Gastrocnemius medialis (tissue), 4 donors: ENCODE measurements at regions of chr4 and their contacts with region 1.

Region 1: DNA sequence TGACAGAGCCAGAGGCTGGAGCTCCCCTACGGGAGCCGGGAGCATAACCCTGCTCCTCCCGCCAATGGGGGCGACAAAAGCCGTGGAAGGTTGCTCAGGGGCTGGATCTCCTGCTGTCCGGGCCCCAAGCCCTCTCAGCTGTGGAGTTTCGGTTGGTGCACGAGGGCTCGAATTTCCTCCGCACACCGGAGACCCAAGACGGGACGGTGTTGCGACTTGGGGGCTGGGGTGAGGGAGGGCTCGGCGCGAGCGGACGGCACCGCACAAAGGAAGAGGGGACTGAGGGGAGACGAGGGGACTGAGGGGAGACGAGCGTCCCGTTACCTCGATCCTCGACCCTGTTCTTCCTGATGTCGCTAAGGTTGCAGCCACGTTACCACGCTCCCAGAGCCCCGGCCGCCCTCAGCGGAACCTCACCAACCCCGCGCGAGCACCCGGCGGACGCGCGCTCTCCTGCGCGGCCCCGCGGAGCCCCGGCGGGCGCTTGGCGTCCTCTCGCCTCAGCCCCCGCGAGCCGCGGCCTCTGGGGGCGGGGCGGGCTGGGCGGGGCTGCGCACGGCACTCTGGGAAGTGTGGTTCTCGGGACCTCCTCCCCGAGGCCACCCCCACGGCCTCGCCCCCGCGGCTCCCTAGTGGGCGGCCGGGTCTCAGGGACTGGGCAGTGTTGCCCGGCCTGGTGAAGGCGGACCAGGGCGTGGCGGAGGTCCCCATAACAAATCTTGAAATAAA is at the start of gene KLHL8:
- DNase-seq: peak; percentile 54 to 81
- ATAC-seq: peak; percentile 87 to 88
- H3K4me3 ChIP-seq: peak within 1 kb of the TSS; percentile 85 to 96 (median 90)
- H3K27ac ChIP-seq: peak within 1 kb of the TSS; percentile 92 to 96 (median 94)
- H3K4me1 ChIP-seq: peaks cover 15 to 23% of the 10 kb centered on the region in 2 donors
- H3K27me3 ChIP-seq: no peaks in the 10 kb centered on the region
- CTCF ChIP-seq: peak in 2 of 5 experiments; percentile 1 to 13
- POLR2A ChIP-seq: peak; percentile 84 to 90
- total RNA-seq, gene KLHL8: 15.5 to 19.4 (median 18.6) TPM

Region 2: DNA sequence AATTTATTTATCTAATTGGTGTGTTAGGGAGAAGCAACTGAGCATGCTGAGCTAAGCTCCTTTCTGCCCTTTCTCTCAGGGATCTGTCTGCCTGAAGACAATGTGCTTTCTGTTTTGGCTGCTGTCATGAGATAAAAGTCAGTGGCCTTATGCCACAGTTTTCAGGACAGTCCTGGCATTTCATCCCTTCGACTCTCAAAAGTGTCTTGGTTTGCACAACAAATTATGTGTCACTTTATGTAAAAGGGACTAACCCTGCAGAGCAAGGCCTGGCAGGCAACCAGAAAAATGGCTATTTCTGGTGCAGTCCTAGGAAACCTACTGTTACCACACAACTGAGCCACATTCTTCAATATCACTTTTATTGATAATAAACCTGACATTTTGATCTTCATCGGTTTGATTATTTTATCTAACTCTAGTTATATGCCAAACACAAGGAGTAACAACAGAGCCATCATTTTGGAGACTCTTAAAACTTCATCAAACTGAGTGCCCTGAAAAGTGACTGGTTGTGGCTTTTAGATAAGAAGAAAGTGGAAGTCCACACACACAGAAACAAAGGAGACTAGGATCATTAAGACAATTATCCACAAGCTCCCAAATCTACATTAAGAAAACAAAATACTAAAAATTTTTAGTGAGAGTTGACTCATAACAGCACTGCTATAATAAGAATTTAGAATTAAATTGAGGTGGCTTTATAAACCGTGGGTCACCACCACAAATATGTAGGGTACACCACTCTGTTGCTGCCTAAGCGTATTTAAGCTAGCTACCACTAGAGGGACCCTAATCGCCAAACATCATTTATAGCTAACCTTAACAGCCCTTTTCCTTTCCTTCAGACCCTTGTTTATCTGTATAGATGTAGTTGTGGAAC is 722.0 kb before region 1 on chr4:
- in situ Hi-C with region 1: no loop called
- intact Hi-C with region 1: no loop called
- DNase-seq: peak in 1 of 2 donors; percentile 17
- ATAC-seq: peak; percentile 48 to 56
- H3K4me3 ChIP-seq: no peak overlapping the region
- H3K27ac ChIP-seq: peak overlapping the region in 1 of 4 donors; percentile 54
- H3K4me1 ChIP-seq: peaks cover 8 to 14% of the 10 kb centered on the region in 2 donors
- H3K27me3 ChIP-seq: no peaks in the 10 kb centered on the region
- CTCF ChIP-seq: peak; percentile 45 to 71 (median 51)
- POLR2A ChIP-seq: no peak

Region 3: DNA sequence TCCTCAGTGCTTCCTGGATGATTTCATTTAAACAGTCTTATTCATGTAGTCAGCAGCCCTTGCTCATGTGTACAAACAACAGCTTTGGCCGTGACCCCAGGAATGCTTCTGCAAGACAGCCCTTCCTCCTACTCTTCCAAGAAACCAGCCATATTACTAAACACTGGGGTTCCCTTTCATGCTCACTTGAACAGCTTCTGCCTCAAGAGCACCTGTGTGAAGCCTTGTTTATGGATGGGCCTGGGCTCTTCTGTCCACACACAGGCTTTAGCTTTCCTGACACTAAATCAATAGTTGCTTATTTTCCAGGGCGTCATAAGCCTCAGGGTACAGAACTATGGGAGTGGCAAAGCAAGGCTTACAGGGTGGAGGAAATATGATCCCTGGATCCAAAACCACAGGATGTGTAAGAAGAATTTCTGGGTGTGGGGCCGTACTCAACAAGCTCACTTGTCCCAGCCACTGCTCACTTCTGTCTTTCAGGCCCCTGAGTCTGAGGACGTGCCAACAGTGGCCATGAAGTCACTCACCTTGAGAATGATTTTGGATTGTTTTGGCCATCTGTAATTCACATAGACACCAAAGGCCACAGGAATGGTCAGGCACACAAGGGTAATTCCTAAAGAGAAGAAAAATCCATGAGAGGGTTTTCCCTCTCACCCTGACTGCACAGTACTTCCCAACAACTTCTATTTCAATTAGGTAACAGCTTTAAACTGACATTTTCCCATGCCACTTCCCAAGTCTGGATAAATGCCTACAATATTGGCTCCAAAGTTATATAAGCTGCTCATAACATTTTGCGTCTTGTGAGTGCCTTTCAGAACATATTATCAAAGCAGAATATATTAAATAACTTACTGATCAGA is 388.8 kb before region 1 on chr4:
- in situ Hi-C with region 1: no loop called
- intact Hi-C with region 1: no loop called
- DNase-seq: peak in 1 of 2 donors; percentile 21
- ATAC-seq: peak in 1 of 2 donors; percentile 33
- H3K4me3 ChIP-seq: no peak overlapping the region
- H3K27ac ChIP-seq: no peak overlapping the region
- H3K4me1 ChIP-seq: no peaks in the 10 kb centered on the region
- H3K27me3 ChIP-seq: no peaks in the 10 kb centered on the region
- CTCF ChIP-seq: no peak
- POLR2A ChIP-seq: no peak

Region 4: GRCh38 chr4:86934771-86935565 is 285.3 kb before region 1 on chr4 and contains the start of gene AFF1:
- in situ Hi-C with region 1: no loop called
- intact Hi-C with region 1: loop called (anchors 5 kb)
- DNase-seq: peak; percentile 92 to 96
- ATAC-seq: peak; percentile 70 to 79
- H3K4me3 ChIP-seq: peak within 1 kb of the TSS; percentile 79 to 97 (median 82)
- H3K27ac ChIP-seq: peak within 1 kb of the TSS; percentile 93 to 99 (median 96)
- H3K4me1 ChIP-seq: peaks cover 29 to 47% of the 10 kb centered on the region in 2 donors
- H3K27me3 ChIP-seq: no peaks in the 10 kb centered on the region
- CTCF ChIP-seq: peak; percentile 7 to 87 (median 58)
- POLR2A ChIP-seq: peak; percentile 97
- total RNA-seq, gene AFF1: 142 to 265 (median 197) TPM

Region 5: DNA sequence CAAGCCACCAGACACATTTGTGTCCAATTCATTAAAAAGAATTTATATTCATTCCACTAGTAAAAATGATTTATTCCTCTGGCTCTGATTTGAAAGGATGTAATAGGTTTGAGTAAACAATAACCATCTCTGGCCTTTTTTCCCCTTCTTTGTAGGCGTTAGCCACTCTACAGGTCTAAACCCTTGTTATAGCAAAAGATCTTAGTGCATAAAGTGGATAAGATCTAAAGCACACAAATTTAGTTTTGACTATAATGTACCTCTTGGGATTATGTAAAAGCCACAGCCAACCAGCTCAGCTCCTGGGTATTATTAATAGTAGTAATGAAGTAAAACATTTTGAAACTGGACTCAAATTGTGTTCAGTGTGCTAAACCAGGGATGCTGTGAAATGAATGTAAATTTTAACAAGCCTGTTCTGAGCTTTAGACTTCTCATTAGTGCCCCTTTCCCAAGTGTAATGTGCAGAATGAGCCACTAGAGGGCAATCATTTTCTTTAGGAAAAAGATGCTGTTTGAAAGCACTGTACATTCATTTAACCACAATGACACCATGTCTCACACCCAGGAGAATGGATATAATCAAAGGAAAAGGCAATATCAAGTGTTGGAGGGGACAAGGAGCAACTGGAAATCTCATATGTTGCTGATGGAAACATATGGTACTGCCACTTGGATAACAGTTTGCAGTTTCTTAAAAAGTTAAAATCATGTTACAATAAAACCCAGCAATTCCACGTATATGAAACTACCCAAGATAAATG is 69.6 kb before region 1 on chr4:
- in situ Hi-C with region 1: loop called in 1 of 4 experiments (anchors 5 kb)
- intact Hi-C with region 1: no loop called
- DNase-seq: peak in 1 of 2 donors; percentile 12
- ATAC-seq: peak; percentile 43 to 64
- H3K4me3 ChIP-seq: no peak overlapping the region
- H3K27ac ChIP-seq: no peak overlapping the region
- H3K4me1 ChIP-seq: no peaks in the 10 kb centered on the region
- H3K27me3 ChIP-seq: no peaks in the 10 kb centered on the region
- CTCF ChIP-seq: peak; percentile 83 to 89 (median 86)
- POLR2A ChIP-seq: no peak

Region 6: GRCh38 chr4:87209696-87210095 is 10.6 kb before region 1 on chr4:
- in situ Hi-C with region 1: no loop called
- intact Hi-C with region 1: no loop called
- DNase-seq: peak in 1 of 2 donors; percentile 54
- ATAC-seq: peak in 1 of 2 donors; percentile 37
- H3K4me3 ChIP-seq: no peak overlapping the region
- H3K27ac ChIP-seq: peak overlapping the region in 1 of 4 donors; percentile 15
- H3K4me1 ChIP-seq: peaks cover 30 to 47% of the 10 kb centered on the region in 2 donors
- H3K27me3 ChIP-seq: no peaks in the 10 kb centered on the region
- CTCF ChIP-seq: no peak
- POLR2A ChIP-seq: no peak

Region 7: GRCh38 chr4:87317543-87317942 is 97.3 kb after region 1 on chr4:
- in situ Hi-C with region 1: no loop called
- intact Hi-C with region 1: no loop called
- DNase-seq: no peak
- ATAC-seq: no peak
- H3K4me3 ChIP-seq: no peak overlapping the region
- H3K27ac ChIP-seq: no peak overlapping the region
- H3K4me1 ChIP-seq: peaks cover 4 to 5% of the 10 kb centered on the region in 2 donors
- H3K27me3 ChIP-seq: no peaks in the 10 kb centered on the region
- CTCF ChIP-seq: no peak
- POLR2A ChIP-seq: no peak